Activated CD4-positive, alpha-beta T cell treated with anti-CD3 and anti-CD28 coated beads, Interleukin-2, amount 10 ng/mL, durations not matched to agents 7 days and 5 days (primary cell): ENCODE measurements at regions of chr5 and their contacts with region 1.

Region 1: GRCh38 chr5:75336625-75337339 is at the start of gene HMGCR:
- DNase-seq: peak; percentile 98
- H3K4me3 Mint-ChIP-seq: no peak within 1 kb of the TSS
- H3K27ac Mint-ChIP-seq: no peak within 1 kb of the TSS
- H3K4me1 Mint-ChIP-seq: peaks cover 36% of the 10 kb centered on the region
- H3K27me3 Mint-ChIP-seq: no peaks in the 10 kb centered on the region
- total RNA-seq, gene HMGCR: 49.4 to 51.1 TPM

Region 2: GRCh38 chr5:75236322-75237316 is 100.2 kb before region 1 on chr5 and contains the start of gene ANKRD31:
- CTCF ChIA-PET with region 1: interaction called, 10 read pairs
- POLR2A ChIA-PET with region 1: interaction called, 4 read pairs
- DNase-seq: peak; percentile 86
- H3K4me3 Mint-ChIP-seq: peak within 1 kb of the TSS; percentile 93
- H3K27ac Mint-ChIP-seq: peak within 1 kb of the TSS; percentile 90
- H3K4me1 Mint-ChIP-seq: peaks cover 18% of the 10 kb centered on the region
- H3K27me3 Mint-ChIP-seq: no peaks in the 10 kb centered on the region
- total RNA-seq, gene ANKRD31: 0.17 TPM

Region 3: GRCh38 chr5:75351139-75351926 is 14.6 kb after region 1 on chr5:
- CTCF ChIA-PET with region 1: interaction called, 11 read pairs
- POLR2A ChIA-PET with region 1: interaction called, 3 read pairs
- DNase-seq: no peak
- H3K4me3 Mint-ChIP-seq: no peak overlapping the region
- H3K27ac Mint-ChIP-seq: peak overlapping the region; percentile 65
- H3K4me1 Mint-ChIP-seq: peaks cover 26% of the 10 kb centered on the region
- H3K27me3 Mint-ChIP-seq: no peaks in the 10 kb centered on the region